PC-9 (cell line): ENCODE measurements at regions of chr11 and their contacts with region 1.

Region 1: DNA sequence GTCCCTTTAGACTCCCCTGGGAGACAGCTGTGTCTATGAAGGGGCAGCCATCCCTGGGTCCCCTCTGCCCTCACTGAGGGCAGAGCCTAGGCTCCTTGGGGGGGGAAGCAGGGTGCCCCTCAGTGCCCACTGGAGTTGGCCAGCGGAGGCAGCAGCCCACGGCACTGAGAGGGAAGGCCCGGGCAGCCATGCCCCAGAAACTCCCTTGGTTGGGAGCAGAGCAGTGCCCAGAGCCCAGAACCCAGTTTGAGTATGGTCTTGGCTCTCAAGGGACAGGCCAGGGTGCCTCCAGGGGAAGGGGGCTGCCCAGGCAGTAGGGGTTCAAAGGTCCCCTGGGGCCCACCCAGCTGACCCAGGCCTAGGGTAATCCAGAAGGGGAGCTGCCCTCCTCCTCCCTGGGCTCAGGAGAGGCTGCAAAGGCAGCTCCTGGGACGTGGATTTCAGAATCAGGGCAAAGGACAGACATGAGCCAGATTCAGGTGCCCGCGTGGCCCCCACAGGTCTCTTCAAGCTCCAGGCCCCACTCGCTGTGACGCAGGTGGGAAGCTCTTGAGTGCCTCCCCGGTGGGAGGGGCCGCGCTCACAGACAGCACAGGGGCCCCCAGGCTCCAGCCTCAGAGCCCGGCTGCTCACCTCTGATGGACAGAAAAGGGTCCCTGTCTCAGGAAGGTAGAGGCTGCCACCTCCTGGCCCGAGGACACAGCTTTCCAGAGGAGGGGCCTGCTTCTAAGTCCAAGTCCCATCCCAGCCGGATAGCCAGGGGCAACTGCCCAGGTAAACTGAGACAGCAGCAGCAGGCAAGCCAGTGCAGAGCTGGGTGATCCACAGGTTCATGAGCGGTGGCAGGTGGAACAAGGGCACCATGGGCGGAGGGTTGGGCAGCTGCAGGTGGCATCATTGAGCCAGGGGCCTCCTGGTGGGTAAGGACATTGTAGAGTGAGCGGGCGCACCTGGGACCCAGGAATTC is 2.6 kb downstream of the C11orf21 start:
- DNase-seq: peak; percentile 40 to 59
- H3K4me3 ChIP-seq: no peak overlapping the region
- H3K27ac ChIP-seq: no peak overlapping the region
- H3K4me1 ChIP-seq: no peaks in the 10 kb centered on the region
- H3K27me3 ChIP-seq: no peaks in the 10 kb centered on the region
- CTCF ChIP-seq: peak; percentile 75

Region 2: DNA sequence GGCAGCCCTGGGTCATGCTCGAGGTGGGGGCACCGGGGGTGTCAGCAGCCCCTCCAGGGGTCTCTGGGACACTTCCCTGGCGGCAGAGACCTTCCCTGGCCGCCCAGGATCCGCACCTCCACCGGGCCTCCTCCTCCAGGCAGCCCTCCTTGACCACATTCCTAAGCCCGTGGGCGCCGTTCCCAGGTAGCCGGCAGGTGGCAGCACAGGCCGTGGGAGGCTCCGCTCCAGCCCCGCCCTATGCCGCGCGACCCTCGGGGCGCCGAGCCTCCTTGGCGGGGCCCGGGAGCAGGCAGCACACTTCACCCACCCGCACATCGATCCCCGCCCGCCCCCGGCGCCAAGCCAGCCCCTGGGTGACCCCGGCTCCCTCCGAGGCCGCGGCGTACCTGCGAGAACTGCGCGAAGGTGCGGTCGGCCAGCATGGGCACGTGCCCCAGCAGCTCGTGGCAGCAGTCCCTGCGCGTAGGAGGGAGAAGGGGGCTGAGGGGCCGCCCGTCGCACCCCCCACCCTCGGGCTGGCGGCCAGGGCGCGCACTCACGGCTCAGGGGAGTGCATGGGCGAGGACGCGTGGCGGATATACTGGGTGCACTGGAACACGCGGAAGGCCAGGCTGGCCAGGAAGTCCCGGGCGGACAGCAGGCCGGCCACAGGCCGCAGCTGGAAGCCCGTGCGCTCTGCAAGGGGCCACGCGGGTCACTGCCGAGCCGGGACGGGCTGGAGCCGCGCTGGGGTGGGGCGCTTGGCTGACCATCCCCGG is 132.8 kb before region 1 on chr11:
- CTCF ChIA-PET with region 1: no interaction called
- POLR2A ChIA-PET with region 1: no interaction called
- intact Hi-C with region 1: loop called (anchors 10 kb)
- DNase-seq: no peak
- H3K4me3 ChIP-seq: no peak overlapping the region
- H3K27ac ChIP-seq: no peak overlapping the region
- H3K4me1 ChIP-seq: peaks cover 42% of the 10 kb centered on the region
- H3K27me3 ChIP-seq: no peaks in the 10 kb centered on the region
- CTCF ChIP-seq: peak; percentile 69

Region 3: GRCh38 chr11:2248762-2249161 is 50.3 kb before region 1 on chr11:
- CTCF ChIA-PET with region 1: no interaction called
- POLR2A ChIA-PET with region 1: no interaction called
- intact Hi-C with region 1: no loop called
- DNase-seq: no peak
- H3K4me3 ChIP-seq: no peak overlapping the region
- H3K27ac ChIP-seq: no peak overlapping the region
- H3K4me1 ChIP-seq: no peaks in the 10 kb centered on the region; the same call in 1 of the 2 replicates
- H3K27me3 ChIP-seq: no peaks in the 10 kb centered on the region
- CTCF ChIP-seq: no peak

Region 4: GRCh38 chr11:2409611-2410468 is 110.8 kb after region 1 on chr11:
- CTCF ChIA-PET with region 1: no interaction called
- POLR2A ChIA-PET with region 1: no interaction called
- intact Hi-C with region 1: no loop called
- DNase-seq: no peak
- H3K4me3 ChIP-seq: no peak overlapping the region
- H3K27ac ChIP-seq: no peak overlapping the region
- H3K4me1 ChIP-seq: no peaks in the 10 kb centered on the region
- H3K27me3 ChIP-seq: 0 out of 2 replicates have a peak, but pooled peaks cover 4% of the 10 kb centered on the region
- CTCF ChIP-seq: no peak

Region 5: GRCh38 chr11:2621894-2622293 is 322.8 kb after region 1 on chr11:
- CTCF ChIA-PET with region 1: no interaction called
- POLR2A ChIA-PET with region 1: no interaction called
- intact Hi-C with region 1: no loop called
- DNase-seq: no peak
- H3K4me3 ChIP-seq: no peak overlapping the region
- H3K27ac ChIP-seq: no peak overlapping the region
- H3K4me1 ChIP-seq: no peaks in the 10 kb centered on the region
- H3K27me3 ChIP-seq: no peaks in the 10 kb centered on the region
- CTCF ChIP-seq: no peak